ENCODE measurements at regions of chr1 and their contacts with region 1.

Region 1: DNA sequence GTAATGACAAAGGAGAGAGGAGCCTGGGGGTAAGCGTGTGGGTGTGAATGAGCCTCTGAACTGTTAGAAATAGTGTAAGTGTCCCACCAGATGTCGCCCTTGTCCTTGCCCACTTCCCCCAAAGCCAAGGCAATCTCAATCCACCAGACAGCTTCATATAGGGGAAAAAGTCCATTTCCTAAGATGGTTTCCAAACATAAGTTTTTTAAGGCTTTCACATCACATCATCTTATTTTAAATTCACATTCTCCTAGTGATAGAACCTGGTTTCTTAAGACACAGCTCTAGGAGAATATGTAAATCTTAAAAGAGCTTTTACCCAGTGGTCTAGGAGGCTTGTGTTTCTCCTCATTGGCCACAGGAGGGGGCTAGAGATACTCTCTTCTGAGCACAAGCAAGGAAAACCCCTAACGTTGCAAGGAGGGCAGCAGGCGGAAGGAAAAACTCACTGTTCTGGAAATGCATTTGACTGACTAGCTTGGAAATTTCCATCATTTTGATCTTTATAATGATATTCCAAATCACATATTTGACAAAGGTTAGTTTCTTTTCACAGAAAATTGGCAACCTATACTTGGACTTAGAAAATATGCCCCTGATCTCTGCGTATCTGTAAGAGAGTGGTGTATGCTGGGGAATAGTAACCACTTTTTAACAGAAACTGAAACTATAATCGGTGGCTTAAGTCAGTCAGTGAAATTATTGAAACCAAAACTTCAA is 51.9 kb upstream of the LPAR3 start:
- DNase-seq: peak; percentile 26
- ATAC-seq: peak; percentile 93
- H3K4me3 Mint-ChIP-seq: peak overlapping the region; percentile 86
- H3K27ac Mint-ChIP-seq: peak overlapping the region; percentile 95
- H3K4me1 Mint-ChIP-seq: peaks cover 17% of the 10 kb centered on the region
- H3K27me3 Mint-ChIP-seq: no peaks in the 10 kb centered on the region
- CTCF ChIP-seq: peak; percentile 100

Region 2: GRCh38 chr1:84959294-84959693 is 14.4 kb after region 1 on chr1:
- CTCF ChIA-PET with region 1: interaction called, 14 read pairs
- POLR2A ChIA-PET with region 1: no interaction called
- intact Hi-C with region 1: no loop called
- DNase-seq: no peak
- ATAC-seq: peak; percentile 42
- H3K4me3 Mint-ChIP-seq: no peak overlapping the region
- H3K27ac Mint-ChIP-seq: peak overlapping the region; percentile 9
- H3K4me1 Mint-ChIP-seq: peaks cover 4% of the 10 kb centered on the region
- H3K27me3 Mint-ChIP-seq: no peaks in the 10 kb centered on the region
- CTCF ChIP-seq: no peak

Region 3: DNA sequence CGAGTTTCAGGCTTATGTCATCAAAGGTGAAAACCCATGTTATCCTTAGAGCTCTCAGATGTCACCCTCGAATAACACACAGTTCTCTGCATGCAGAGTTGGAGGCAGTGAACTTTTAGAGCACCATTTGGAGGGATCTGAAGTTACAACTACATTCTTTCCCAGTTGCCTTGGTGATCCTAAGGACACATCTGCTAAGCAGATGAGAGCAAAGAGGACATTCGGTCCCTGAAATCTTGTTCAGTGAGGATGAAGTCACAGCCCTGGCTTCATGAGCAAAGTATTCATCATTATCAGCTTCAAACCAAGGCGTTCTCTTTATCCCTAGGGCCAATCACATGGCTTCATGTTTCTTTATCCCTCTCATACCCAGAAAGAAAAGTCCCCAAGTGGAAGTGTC is 75.1 kb after region 1 on chr1:
- CTCF ChIA-PET with region 1: interaction called, 366 read pairs
- POLR2A ChIA-PET with region 1: interaction called, 4 read pairs
- intact Hi-C with region 1: no loop called
- DNase-seq: no peak
- ATAC-seq: no peak
- H3K4me3 Mint-ChIP-seq: no peak overlapping the region
- H3K27ac Mint-ChIP-seq: no peak overlapping the region
- H3K4me1 Mint-ChIP-seq: no peaks in the 10 kb centered on the region
- H3K27me3 Mint-ChIP-seq: no peaks in the 10 kb centered on the region
- CTCF ChIP-seq: no peak

Region 4: GRCh38 chr1:85048296-85049064 is 103.6 kb after region 1 on chr1 and contains the start of gene MCOLN3:
- CTCF ChIA-PET with region 1: interaction called, 4 read pairs
- POLR2A ChIA-PET with region 1: no interaction called
- intact Hi-C with region 1: loop called (anchors 1 kb)
- DNase-seq: peak; percentile 42
- ATAC-seq: peak; percentile 69
- H3K4me3 Mint-ChIP-seq: peak within 1 kb of the TSS; percentile 76
- H3K27ac Mint-ChIP-seq: no peak within 1 kb of the TSS
- H3K4me1 Mint-ChIP-seq: peaks cover 8% of the 10 kb centered on the region
- H3K27me3 Mint-ChIP-seq: peaks cover 41% of the 10 kb centered on the region
- CTCF ChIP-seq: no peak
- total RNA-seq, gene MCOLN3: 0.16 TPM in 1 of 2 replicates, not detected in the other

Region 5: GRCh38 chr1:85200870-85201339 is 256.0 kb after region 1 on chr1 and contains the start of gene SYDE2:
- CTCF ChIA-PET with region 1: interaction called, 6 read pairs
- POLR2A ChIA-PET with region 1: no interaction called
- intact Hi-C with region 1: loop called (anchors 1 kb)
- DNase-seq: peak; percentile 69
- ATAC-seq: peak; percentile 81
- H3K4me3 Mint-ChIP-seq: peak within 1 kb of the TSS; percentile 92
- H3K27ac Mint-ChIP-seq: peak within 1 kb of the TSS; percentile 79
- H3K4me1 Mint-ChIP-seq: peaks cover 14% of the 10 kb centered on the region
- H3K27me3 Mint-ChIP-seq: peaks cover 26% of the 10 kb centered on the region
- CTCF ChIP-seq: no peak
- total RNA-seq, gene SYDE2: 0.38 and 0.64 TPM in 2 replicates

Region 6: GRCh38 chr1:85707990-85708828 is 763.3 kb after region 1 on chr1 and contains the start of gene ZNHIT6:
- CTCF ChIA-PET with region 1: no interaction called
- POLR2A ChIA-PET with region 1: interaction called, 3 read pairs
- intact Hi-C with region 1: loop called (anchors 10 kb)
- DNase-seq: peak; percentile 69
- ATAC-seq: peak; percentile 96
- H3K4me3 Mint-ChIP-seq: no peak within 1 kb of the TSS
- H3K27ac Mint-ChIP-seq: no peak within 1 kb of the TSS
- H3K4me1 Mint-ChIP-seq: peaks cover 24% of the 10 kb centered on the region
- H3K27me3 Mint-ChIP-seq: no peaks in the 10 kb centered on the region
- CTCF ChIP-seq: no peak
- total RNA-seq, gene ZNHIT6: 19.6 and 21.1 TPM in 2 replicates

Measured in activated B cell treated with CpG ODN at 0.5 μM for 24 hours (primary cell).